Dorsolateral prefrontal cortex (tissue), 120 donors: ENCODE measurements at regions of chr12 and their contacts with region 1.

Region 1: GRCh38 chr12:132956011-132956788 is at the start of gene ZNF605:
- DNase-seq: peak; percentile 84 to 94 (median 90)
- H3K4me3 ChIP-seq: peak within 1 kb of the TSS; percentile 60 to 99 (median 87)
- H3K27ac ChIP-seq: peak within 1 kb of the TSS; percentile 77 to 98 (median 94)
- H3K27me3 ChIP-seq: no peaks in the 10 kb centered on the region
- CTCF ChIP-seq: peak in 9 of 56 donors; percentile 6 to 21 (median 10)
- total RNA-seq, gene ZNF605: 19.5 to 58.5 (median 30.4) TPM

Region 2: GRCh38 chr12:132828706-132829534 is 127.3 kb before region 1 on chr12 and contains the start of gene GOLGA3:
- intact Hi-C with region 1: loop called in 1 of 2 experiments (anchors 5 kb)
- DNase-seq: peak; percentile 89 to 95 (median 92)
- H3K4me3 ChIP-seq: peak within 1 kb of the TSS; percentile 51 to 100 (median 91)
- H3K27ac ChIP-seq: peak within 1 kb of the TSS; percentile 64 to 100 (median 98)
- H3K27me3 ChIP-seq: no peaks in the 10 kb centered on the region
- CTCF ChIP-seq: peak in 13 of 56 donors; percentile 6 to 50 (median 26)
- total RNA-seq, gene GOLGA3: 46.0 to 96.5 (median 63.7) TPM

Region 3: GRCh38 chr12:132887513-132888351 is 68.5 kb before region 1 on chr12 and contains the start of gene CHFR:
- intact Hi-C with region 1: loop called in 1 of 2 experiments (anchors 5 kb)
- DNase-seq: peak; percentile 92 to 98 (median 97)
- H3K4me3 ChIP-seq: peak within 1 kb of the TSS; percentile 65 to 97 (median 88)
- H3K27ac ChIP-seq: peak within 1 kb of the TSS; percentile 51 to 98 (median 94)
- H3K27me3 ChIP-seq: no peaks in the 10 kb centered on the region
- CTCF ChIP-seq: peak in 33 of 56 donors; percentile 3 to 60 (median 19)
- total RNA-seq, gene CHFR: 37.6 to 97.7 (median 65.3) TPM

Region 4: DNA sequence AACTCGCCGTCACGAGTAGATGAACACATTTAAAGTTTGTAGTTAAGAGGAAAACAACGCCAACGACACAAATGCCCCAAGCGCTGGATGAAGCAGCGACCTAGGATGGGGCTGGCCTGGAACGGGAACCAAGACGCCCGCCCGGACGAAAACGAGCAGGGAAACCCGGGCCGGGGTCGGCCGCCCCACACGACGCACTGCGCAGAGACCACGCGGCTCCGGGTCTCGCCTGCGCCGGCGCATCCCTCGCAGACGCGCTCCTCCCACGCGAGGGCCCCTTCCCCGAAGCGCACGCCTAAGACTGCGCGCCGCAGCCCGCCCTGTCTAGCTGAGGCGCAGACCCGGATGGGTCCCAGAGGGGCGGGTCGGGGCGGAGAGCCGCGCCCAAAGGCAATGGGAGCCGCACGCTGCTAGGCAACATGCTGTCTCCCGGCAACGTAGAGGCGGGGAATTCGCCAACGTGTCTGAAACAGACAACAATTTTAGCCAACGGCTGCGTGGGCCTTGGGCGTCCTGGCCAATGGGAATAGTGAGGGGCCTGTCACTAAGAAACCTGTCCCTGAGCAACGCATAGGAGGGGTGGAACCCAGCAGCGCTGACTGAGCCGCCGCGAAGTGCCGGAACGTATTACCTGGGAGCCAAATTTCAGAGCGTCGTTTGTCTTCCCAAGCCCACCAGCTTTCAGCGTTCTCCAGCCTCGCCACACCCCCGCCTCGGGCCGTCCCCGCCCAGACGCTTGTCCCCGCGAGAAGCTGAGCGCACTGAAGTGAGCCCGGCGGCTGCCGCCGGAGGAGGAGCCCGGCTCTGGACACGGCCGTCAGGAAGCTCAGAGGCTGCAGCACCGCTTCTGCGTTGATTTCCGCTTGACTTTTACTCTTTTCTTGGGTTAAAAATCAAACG is 47.8 kb before region 1 on chr12:
- intact Hi-C with region 1: loop called in 1 of 2 experiments (anchors 5 kb)
- DNase-seq: peak; percentile 88 to 98 (median 98)
- H3K4me3 ChIP-seq: peak overlapping the region; percentile 37 to 90 (median 76)
- H3K27ac ChIP-seq: peak overlapping the region in 54 of 59 donors; percentile 14 to 88 (median 74)
- H3K27me3 ChIP-seq: no peaks in the 10 kb centered on the region
- CTCF ChIP-seq: peak in 12 of 56 donors; percentile 6 to 35 (median 27)

Region 5: GRCh38 chr12:132986001-132986912 is 30.1 kb after region 1 on chr12 and contains the start of gene ZNF26:
- intact Hi-C with region 1: loop called (anchors 1 to 2 kb)
- DNase-seq: peak; percentile 83 to 94 (median 92)
- H3K4me3 ChIP-seq: peak within 1 kb of the TSS; percentile 73 to 100 (median 96)
- H3K27ac ChIP-seq: peak within 1 kb of the TSS; percentile 9 to 95 (median 85)
- H3K27me3 ChIP-seq: no peaks in the 10 kb centered on the region
- CTCF ChIP-seq: peak in 25 of 56 donors; percentile 9 to 50 (median 27)
- total RNA-seq, gene ZNF26: 9.4 to 26.4 (median 16.9) TPM

Region 6: GRCh38 chr12:133023566-133023965 is 67.4 kb after region 1 on chr12:
- intact Hi-C with region 1: no loop called
- DNase-seq: no peak
- H3K4me3 ChIP-seq: no peak overlapping the region
- H3K27ac ChIP-seq: peak overlapping the region in 1 of 59 donors; percentile 10
- H3K27me3 ChIP-seq: no peaks in the 10 kb centered on the region
- CTCF ChIP-seq: no peak

Region 7: DNA sequence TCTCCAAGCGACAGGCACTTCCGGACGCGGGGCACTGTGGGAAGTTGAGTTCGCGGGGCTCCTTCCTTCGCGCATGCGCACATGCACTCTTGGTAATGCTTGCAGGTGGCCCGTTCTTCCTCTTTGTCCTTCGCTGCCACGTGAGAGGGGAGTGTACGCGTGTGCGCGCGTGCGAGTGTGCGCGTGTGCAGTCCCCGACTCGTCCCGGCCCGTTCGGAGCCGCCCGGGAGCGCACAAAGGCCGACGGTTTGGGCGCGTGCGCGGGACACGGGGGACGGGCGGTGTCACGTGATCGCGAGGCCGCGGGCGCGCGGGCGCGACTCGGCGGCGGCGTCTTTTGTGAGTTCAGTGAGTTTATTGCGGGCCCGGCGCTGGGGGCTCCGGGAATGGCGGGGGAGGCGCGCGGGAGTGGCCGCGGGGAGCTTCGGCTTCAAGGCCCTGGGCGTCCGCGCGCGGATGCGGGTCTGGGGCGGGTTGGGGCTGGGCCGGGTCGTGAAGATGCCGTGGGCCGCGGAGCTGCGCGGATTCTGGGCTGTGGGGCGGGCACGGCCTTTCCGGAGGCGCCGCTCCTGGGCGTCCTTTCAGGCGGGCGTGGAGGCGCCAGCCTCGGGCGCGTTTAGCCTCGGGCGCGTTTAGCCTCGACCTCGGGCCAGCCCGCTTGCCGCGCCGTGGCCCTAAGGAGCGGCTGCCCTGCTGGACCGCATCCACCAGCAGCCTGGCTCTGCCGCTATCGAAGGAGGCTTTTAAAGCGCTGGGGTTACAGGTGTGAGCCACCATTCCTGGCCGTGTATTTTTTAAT is 81.2 kb after region 1 on chr12 and contains the start of gene ZNF84:
- intact Hi-C with region 1: loop called in 1 of 2 experiments (anchors 2 kb)
- DNase-seq: peak; percentile 84 to 96 (median 94)
- H3K4me3 ChIP-seq: peak within 1 kb of the TSS; percentile 54 to 96 (median 87)
- H3K27ac ChIP-seq: peak within 1 kb of the TSS; percentile 77 to 97 (median 94)
- H3K27me3 ChIP-seq: no peaks in the 10 kb centered on the region
- CTCF ChIP-seq: peak in 12 of 56 donors; percentile 3 to 34 (median 19)
- total RNA-seq, gene ZNF84: 41.1 to 80.4 (median 61.2) TPM

Region 8: GRCh38 chr12:133080368-133081158 is 124.4 kb after region 1 on chr12 and contains the start of gene ZNF140:
- intact Hi-C with region 1: loop called in 1 of 2 experiments (anchors 5 kb)
- DNase-seq: peak; percentile 96 to 99 (median 98)
- H3K4me3 ChIP-seq: peak within 1 kb of the TSS; percentile 72 to 100 (median 94)
- H3K27ac ChIP-seq: peak within 1 kb of the TSS; percentile 88 to 100 (median 97)
- H3K27me3 ChIP-seq: peaks cover 0 to 2% (median 0%) of the 10 kb centered on the region in 45 donors
- CTCF ChIP-seq: peak in 27 of 56 donors; percentile 5 to 52 (median 29)
- total RNA-seq, gene ZNF140: 9.3 to 21.3 (median 13.5) TPM

Region 9: DNA sequence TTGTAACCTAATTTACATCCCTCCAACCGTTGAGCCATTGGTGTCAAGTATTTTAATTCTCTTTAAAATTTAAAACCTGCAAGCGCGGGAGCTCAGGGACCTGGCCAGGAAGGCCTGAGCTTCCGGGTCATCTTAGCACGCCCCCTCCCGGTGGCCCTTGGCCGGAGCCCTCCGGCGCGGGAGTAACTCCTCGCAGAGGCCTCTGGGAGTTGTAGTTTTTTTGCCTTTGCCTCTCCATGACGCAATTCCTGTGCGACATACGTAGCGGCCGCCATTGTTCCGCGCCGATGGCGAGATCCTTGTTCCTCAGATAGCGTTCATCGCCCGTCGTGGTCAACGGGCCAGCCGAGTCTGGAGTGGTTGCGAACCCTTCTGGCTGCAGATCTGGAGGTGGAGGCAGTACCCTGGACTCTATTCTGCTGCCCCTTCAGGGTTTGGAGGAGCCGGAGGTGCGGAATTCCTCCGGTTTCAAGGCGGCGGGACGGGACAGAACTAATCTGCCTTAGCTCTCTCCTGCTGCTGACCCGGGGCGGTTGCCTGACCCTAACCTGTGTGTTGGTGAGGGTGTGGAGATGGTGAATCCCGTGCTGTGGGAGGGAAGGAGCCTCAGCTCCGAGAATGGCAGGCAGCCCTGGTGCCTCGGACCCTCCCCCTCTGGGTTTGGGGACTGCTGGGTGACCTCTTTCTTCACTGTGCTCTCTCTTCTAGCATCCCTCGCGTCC is 225.2 kb after region 1 on chr12 and contains the start of gene ZNF268:
- intact Hi-C with region 1: no loop called
- DNase-seq: peak; percentile 81 to 92 (median 86)
- H3K4me3 ChIP-seq: peak within 1 kb of the TSS; percentile 56 to 99 (median 90)
- H3K27ac ChIP-seq: peak within 1 kb of the TSS in 44 of 59 donors; percentile 8 to 86 (median 52)
- H3K27me3 ChIP-seq: no peaks in the 10 kb centered on the region
- CTCF ChIP-seq: peak; percentile 61 to 94 (median 84)
- total RNA-seq, gene ZNF268: 12.1 to 30.3 (median 21.0) TPM